ENCODE measurements at regions of chr14 and their contacts with region 1.

Region 1: DNA sequence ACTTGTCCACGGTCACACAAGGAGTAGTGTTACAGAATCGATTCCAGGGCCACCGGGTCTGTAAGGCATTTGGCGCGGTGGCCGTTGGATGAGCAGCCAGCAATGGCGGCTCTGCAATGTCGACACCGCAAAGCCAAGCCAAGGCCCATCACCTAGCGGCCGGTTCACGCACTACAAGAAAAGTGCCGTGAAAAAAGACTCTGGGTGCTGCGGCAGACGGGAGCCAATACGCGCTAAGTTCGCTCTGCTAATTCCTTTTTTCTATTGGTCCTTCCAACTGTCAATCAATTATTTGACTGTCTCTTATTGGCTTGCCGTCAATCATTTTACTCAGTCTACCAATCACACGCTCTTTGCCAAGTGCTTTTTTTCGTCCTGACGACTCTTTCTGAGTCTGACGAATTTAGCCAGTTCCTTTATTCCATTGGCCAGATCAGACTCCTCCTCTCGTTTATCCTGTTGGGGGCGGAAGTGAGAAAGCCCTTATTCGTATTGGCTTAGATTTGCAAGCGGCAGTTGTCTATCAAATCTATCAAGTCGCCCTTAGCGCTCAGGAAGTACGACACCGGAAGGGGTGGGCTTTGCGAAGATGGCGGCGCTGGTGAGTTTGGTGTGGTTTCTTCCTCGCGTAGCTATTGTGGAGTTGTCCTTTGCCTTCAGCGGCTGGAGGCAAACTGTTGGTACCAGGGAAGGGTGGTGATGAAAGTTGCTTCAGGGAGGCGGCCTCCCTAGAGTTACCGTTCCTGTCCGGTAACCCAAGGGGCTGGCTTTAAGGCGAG is at the start of gene NGDN:
- DNase-seq: peak; percentile 91 to 96 (median 96)
- H3K4me3 ChIP-seq: peak within 1 kb of the TSS; percentile 51
- H3K27ac ChIP-seq: peak within 1 kb of the TSS; percentile 71 to 78
- H3K4me1 ChIP-seq: no peaks in the 10 kb centered on the region
- H3K27me3 ChIP-seq: no peaks in the 10 kb centered on the region
- CTCF ChIP-seq: peak; percentile 92 to 95 (median 92)
- EP300 ChIP-seq: no peak
- POLR2A ChIP-seq: peak; percentile 53
- total RNA-seq, gene NGDN: 32.9 to 51.6 (median 38.4) TPM

Region 2: DNA sequence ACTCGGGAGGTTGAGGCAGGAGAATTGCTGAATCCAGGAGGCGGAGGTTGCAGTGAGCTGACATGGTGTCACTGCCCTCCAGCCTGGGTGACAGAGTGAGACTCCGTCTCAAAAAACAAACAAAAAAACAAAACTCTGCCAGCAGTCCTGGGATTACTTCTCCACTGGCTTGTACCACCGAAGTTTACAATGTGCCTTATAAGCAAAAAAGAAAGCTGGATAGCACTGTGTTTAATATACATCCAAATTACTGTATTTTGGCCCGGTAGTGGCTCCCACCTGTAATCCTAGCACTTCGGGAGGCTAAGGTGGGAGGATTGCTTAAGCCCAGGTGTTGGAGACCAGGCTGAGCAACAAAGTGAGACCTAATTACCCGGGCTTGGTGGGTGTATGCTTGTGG is 200.1 kb before region 1 on chr14:
- intact Hi-C with region 1: loop called in 1 of 4 experiments (anchors 10 kb)
- DNase-seq: no peak
- H3K4me3 ChIP-seq: no peak overlapping the region
- H3K27ac ChIP-seq: no peak overlapping the region
- H3K4me1 ChIP-seq: no peaks in the 10 kb centered on the region
- H3K27me3 ChIP-seq: no peaks in the 10 kb centered on the region
- CTCF ChIP-seq: no peak
- EP300 ChIP-seq: no peak
- POLR2A ChIP-seq: no peak

Region 3: GRCh38 chr14:23307687-23308644 is 161.3 kb before region 1 on chr14:
- intact Hi-C with region 1: no loop called
- DNase-seq: peak in 1 of 5 donors; percentile 39
- H3K4me3 ChIP-seq: no peak overlapping the region
- H3K27ac ChIP-seq: peak overlapping the region in 1 of 2 donors; percentile 86
- H3K4me1 ChIP-seq: peaks cover 9% of the 10 kb centered on the region
- H3K27me3 ChIP-seq: no peaks in the 10 kb centered on the region
- CTCF ChIP-seq: no peak
- EP300 ChIP-seq: no peak
- POLR2A ChIP-seq: no peak

Region 4: GRCh38 chr14:23567192-23568020 is 98.1 kb after region 1 on chr14 and contains the start of gene AP1G2:
- intact Hi-C with region 1: no loop called
- DNase-seq: peak; percentile 92 to 95 (median 92)
- H3K4me3 ChIP-seq: peak within 1 kb of the TSS; percentile 73
- H3K27ac ChIP-seq: peak within 1 kb of the TSS; percentile 75 to 81
- H3K4me1 ChIP-seq: no peaks in the 10 kb centered on the region
- H3K27me3 ChIP-seq: no peaks in the 10 kb centered on the region
- CTCF ChIP-seq: no peak
- EP300 ChIP-seq: no peak
- POLR2A ChIP-seq: peak; percentile 63
- total RNA-seq, gene AP1G2: 76.3 to 129 (median 92.8) TPM